ENCODE measurements at regions of chr4 and their contacts with region 1.

Region 1: GRCh38 chr4:82284858-82285805 is 88.7 kb downstream of the HNRNPD start:
- DNase-seq: peak; percentile 100
- H3K4me3 ChIP-seq: peak overlapping the region; percentile 47
- H3K4me3 Mint-ChIP-seq: peak overlapping the region; percentile 66
- H3K27ac Mint-ChIP-seq: no peak overlapping the region
- H3K4me1 ChIP-seq: peaks cover 12% of the 10 kb centered on the region
- H3K4me1 Mint-ChIP-seq: peaks cover 19% of the 10 kb centered on the region
- H3K27me3 ChIP-seq: no peaks in the 10 kb centered on the region
- H3K27me3 Mint-ChIP-seq: no peaks in the 10 kb centered on the region
- CTCF ChIP-seq: peak; percentile 81 to 95

Region 2: DNA sequence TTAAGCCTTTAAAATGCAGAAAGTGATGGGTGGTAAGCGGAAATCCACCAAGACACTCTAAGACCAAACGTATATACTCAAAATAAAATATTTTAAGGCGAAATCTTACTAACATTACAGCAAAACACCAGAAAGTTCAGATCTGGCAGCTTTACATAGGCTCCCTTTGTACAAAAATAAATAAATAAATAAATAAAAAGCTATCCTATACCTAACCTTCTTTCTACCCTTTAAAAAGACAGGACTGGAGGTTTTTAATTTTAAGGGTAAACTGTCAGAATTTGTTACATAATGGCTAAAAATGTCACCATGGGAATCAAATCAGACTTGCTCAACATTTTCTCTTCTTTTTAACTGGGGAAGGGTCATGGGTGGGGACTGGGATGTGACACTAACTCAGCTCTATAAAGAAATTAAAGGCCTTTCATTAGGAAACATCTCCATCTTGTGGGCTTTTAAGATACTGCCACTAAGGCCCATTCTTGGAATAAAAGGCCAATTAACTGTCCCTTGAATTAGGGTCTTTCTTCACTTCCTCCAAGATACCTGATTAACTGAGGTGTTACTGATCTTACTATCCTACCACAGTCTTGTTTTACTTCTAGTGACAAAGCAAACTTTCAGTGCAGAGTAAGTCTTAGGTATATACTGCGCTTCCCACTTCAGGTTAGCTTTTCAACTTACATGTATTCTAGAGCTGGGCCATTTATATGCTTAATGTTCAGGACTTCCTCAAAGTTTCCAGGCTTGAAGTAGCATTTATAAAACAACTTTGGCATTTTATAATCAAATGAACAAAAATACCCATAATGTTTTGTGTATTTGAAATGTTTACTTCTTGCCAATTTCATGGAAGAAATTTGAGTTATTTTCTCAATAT is 75.4 kb after region 1 on chr4:
- CTCF ChIA-PET with region 1: interaction called, 6 read pairs
- POLR2A ChIA-PET with region 1: no interaction called
- intact Hi-C with region 1: loop called (anchors 2 kb)
- DNase-seq: peak in 1 of 2 experiments; percentile 29
- H3K4me3 ChIP-seq: no peak overlapping the region
- H3K4me3 Mint-ChIP-seq: no peak overlapping the region
- H3K27ac Mint-ChIP-seq: no peak overlapping the region
- H3K4me1 ChIP-seq: peaks cover 12% of the 10 kb centered on the region; the same call in 1 of the 2 replicates
- H3K4me1 Mint-ChIP-seq: peaks cover 7% of the 10 kb centered on the region
- H3K27me3 ChIP-seq: no peaks in the 10 kb centered on the region
- H3K27me3 Mint-ChIP-seq: no peaks in the 10 kb centered on the region
- CTCF ChIP-seq: peak; percentile 53

Region 3: DNA sequence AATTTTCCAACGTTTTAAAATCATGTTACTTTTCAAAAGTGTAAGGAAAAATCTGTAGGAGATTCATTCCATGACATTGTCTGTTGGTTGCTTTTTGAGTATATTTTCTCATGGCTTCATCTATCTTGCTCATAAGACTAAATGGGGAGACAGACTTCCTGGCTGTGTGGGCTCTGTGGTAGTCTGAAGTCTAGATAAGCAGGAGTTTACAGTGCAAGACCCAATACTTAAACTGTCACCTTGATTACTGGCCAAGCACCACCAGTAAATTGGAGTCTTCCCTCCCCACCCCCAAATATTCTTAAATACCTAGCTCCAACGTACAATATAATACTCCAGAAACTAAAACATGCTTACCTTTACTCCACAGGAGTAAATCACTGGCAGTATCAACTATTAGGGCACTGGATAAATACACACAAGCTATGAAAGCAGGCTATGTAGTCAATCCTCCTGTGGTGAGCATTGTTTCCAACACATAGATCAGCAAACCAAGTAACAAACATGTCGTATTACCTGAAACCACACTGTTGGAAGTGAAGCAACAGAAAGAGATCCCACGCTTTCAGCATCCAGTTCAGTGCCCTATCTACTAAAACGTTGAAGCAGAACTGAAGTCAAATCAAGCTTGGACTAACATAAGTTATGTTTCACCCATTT is 82.4 kb after region 1 on chr4:
- CTCF ChIA-PET with region 1: no interaction called
- POLR2A ChIA-PET with region 1: interaction called, 23 read pairs
- intact Hi-C with region 1: no loop called
- DNase-seq: no peak
- H3K4me3 ChIP-seq: no peak overlapping the region
- H3K4me3 Mint-ChIP-seq: no peak overlapping the region
- H3K27ac Mint-ChIP-seq: no peak overlapping the region
- H3K4me1 ChIP-seq: peaks cover 38% of the 10 kb centered on the region; the same call in 1 of the 2 replicates
- H3K4me1 Mint-ChIP-seq: no peaks in the 10 kb centered on the region
- H3K27me3 ChIP-seq: no peaks in the 10 kb centered on the region
- H3K27me3 Mint-ChIP-seq: no peaks in the 10 kb centered on the region
- CTCF ChIP-seq: no peak